IMR-90 (cell line): ENCODE measurements at regions of chr3 and their contacts with region 1.

Region 1: GRCh38 chr3:43855674-43856299 is 165.0 kb downstream of the ABHD5 start:
- DNase-seq: peak; percentile 56
- ATAC-seq: peak; percentile 85
- H3K4me3 ChIP-seq: no peak overlapping the region
- H3K27ac ChIP-seq: no peak overlapping the region
- H3K4me1 ChIP-seq: peaks cover 9% of the 10 kb centered on the region
- H3K27me3 ChIP-seq: peaks cover 2% of the 10 kb centered on the region; the same call in 1 of the 2 replicates
- CTCF ChIP-seq: peak; percentile 68
- POLR2A ChIP-seq: no peak
- RAD21 ChIP-seq: peak; percentile 75

Region 2: DNA sequence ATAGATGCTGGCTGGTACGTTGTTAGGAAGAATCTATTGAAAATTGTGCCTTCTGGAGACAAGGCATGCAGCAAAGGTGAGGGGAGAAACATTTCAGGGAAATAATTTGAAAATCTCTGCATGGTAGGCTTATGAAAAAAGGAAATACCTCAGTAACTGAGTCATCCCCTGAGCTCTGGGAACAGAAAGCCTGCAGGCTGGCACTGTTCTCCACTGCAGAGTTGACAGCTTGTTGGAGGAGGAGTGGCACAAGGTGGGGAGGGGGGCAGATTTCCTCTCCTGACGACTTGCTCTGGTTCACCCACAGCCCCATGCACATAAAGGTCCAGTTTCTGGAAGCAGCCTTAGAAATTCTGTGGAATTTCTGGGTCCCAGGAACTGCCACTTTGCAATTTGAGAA is 14.3 kb after region 1 on chr3:
- CTCF ChIA-PET with region 1: interaction called, 26 read pairs
- POLR2A ChIA-PET with region 1: interaction called, 3 read pairs
- dilution Hi-C with region 1: no loop called
- in situ Hi-C with region 1: no loop called
- intact Hi-C with region 1: no loop called
- DNase-seq: peak; percentile 69
- ATAC-seq: peak; percentile 65
- H3K4me3 ChIP-seq: no peak overlapping the region
- H3K27ac ChIP-seq: peak overlapping the region; percentile 3
- H3K4me1 ChIP-seq: peaks cover 38% of the 10 kb centered on the region
- H3K27me3 ChIP-seq: no peaks in the 10 kb centered on the region
- CTCF ChIP-seq: no peak
- POLR2A ChIP-seq: no peak
- RAD21 ChIP-seq: no peak

Region 3: GRCh38 chr3:44114142-44114541 is 258.4 kb after region 1 on chr3:
- CTCF ChIA-PET with region 1: no interaction called
- POLR2A ChIA-PET with region 1: no interaction called
- dilution Hi-C with region 1: no loop called
- in situ Hi-C with region 1: no loop called
- intact Hi-C with region 1: loop called (anchors 10 kb)
- DNase-seq: peak; percentile 3
- ATAC-seq: peak; percentile 49; the same call in 1 of the 2 replicates
- H3K4me3 ChIP-seq: no peak overlapping the region
- H3K27ac ChIP-seq: no peak overlapping the region
- H3K4me1 ChIP-seq: no peaks in the 10 kb centered on the region
- H3K27me3 ChIP-seq: peaks cover 9% of the 10 kb centered on the region
- CTCF ChIP-seq: peak; percentile 42
- POLR2A ChIP-seq: no peak
- RAD21 ChIP-seq: peak; percentile 47